GM12878 (cell line): ENCODE measurements at regions of chr15 and their contacts with region 1.

Region 1: DNA sequence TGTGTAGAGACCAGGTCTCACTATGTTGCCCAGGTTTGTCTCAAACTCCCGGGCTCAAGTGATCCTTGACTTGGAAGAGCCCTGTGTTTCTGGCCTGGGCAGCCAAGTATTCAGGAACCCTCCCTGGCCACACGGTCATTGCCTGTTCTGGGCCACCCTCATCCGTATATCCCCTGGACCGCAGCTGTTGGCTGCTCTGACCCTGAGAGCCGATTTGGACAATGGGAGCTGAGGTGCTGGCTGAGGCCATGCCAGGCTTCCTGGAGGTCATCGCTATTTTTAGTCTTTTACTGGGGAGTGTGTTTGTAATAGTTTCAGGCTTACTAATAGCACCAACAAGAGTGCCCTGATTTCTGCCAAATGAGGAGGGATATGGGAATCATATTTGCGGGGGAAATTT is 60.7 kb downstream of the ADAMTS7 start:
- DNase-seq: no peak
- ATAC-seq: no peak
- H3K4me3 ChIP-seq: no peak overlapping the region
- H3K27ac ChIP-seq: no peak overlapping the region
- H3K4me1 ChIP-seq: no peaks in the 10 kb centered on the region
- H3K27me3 ChIP-seq: no peaks in the 10 kb centered on the region
- CTCF ChIP-seq: no peak
- EP300 ChIP-seq: no peak
- POLR2A ChIP-seq: no peak
- RAD21 ChIP-seq: no peak

Region 2: GRCh38 chr15:77944002-77944867 is 806.3 kb before region 1 on chr15:
- CTCF ChIA-PET with region 1: no interaction called
- POLR2A ChIA-PET with region 1: no interaction called
- RAD21 ChIA-PET with region 1: no interaction called
- SMC1A ChIA-PET with region 1: no interaction called
- in situ Hi-C with region 1: loop called (anchors 5 kb)
- intact Hi-C with region 1: no loop called
- DNase-seq: no peak
- ATAC-seq: peak; percentile 91
- H3K4me3 ChIP-seq: peak overlapping the region; percentile 50; the same call in 1 of the 2 replicates
- H3K27ac ChIP-seq: no peak overlapping the region
- H3K4me1 ChIP-seq: no peaks in the 10 kb centered on the region
- H3K27me3 ChIP-seq: no peaks in the 10 kb centered on the region
- CTCF ChIP-seq: no peak
- EP300 ChIP-seq: no peak
- POLR2A ChIP-seq: peak; percentile 40; the same call in 1 of the 2 replicates
- RAD21 ChIP-seq: no peak

Region 3: GRCh38 chr15:78618490-78618934 is 132.1 kb before region 1 on chr15:
- CTCF ChIA-PET with region 1: interaction called, 4 read pairs
- POLR2A ChIA-PET with region 1: no interaction called
- RAD21 ChIA-PET with region 1: no interaction called
- SMC1A ChIA-PET with region 1: interaction called, 3 read pairs
- in situ Hi-C with region 1: no loop called
- intact Hi-C with region 1: loop called (anchors 1 kb)
- DNase-seq: peak; percentile 37
- ATAC-seq: peak; percentile 92
- H3K4me3 ChIP-seq: no peak overlapping the region
- H3K27ac ChIP-seq: no peak overlapping the region
- H3K4me1 ChIP-seq: no peaks in the 10 kb centered on the region
- H3K27me3 ChIP-seq: peaks cover 5 to 7% of the 10 kb centered on the region in 2 experiments
- CTCF ChIP-seq: peak; percentile 77 to 83 (median 80)
- EP300 ChIP-seq: no peak
- POLR2A ChIP-seq: no peak
- RAD21 ChIP-seq: peak; percentile 84

Region 4: DNA sequence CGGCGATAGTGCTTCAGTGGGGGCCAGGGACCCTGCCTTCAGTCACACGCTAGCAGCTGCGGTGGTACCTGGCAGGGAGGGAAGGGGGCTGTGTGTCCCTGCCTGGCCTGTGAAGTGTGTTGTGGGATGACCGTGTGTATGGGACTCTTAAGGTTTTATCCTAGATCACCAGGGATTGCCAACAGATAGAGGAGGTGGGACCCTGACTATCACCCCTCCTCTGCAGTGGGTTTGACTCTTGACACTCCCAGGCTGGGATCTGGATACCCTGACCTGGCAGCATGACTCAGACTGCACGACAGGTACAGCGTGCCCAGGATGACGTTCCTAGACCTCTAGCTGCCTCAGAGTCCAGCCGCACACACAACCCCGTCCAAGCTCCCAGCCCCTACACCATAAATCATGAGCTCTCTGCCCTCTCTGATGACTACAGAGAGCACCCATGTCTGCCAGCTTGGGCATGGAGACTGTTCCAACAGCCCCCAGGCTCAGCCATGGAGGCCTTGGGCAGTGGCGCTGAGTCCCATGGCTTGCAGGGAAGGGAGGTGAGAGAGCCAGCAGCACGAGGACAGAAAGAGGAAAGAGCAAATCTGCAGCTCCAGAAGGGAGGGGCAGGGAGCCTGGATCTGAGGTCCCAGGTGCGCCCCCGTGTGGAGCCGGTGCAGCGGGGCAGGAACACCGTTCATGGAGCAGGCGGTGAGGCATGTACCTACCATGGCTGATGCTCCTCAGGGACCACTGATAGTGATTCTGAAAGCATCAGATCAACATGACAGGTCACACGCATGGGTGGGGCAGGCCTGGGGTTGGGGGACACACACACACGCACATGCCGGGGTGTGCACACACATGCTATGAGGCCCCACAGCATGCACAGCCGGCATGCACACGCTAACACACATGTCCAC is 10.3 kb before region 1 on chr15:
- CTCF ChIA-PET with region 1: interaction called, 18 read pairs
- POLR2A ChIA-PET with region 1: no interaction called
- RAD21 ChIA-PET with region 1: interaction called, 3 read pairs
- SMC1A ChIA-PET with region 1: no interaction called
- in situ Hi-C with region 1: no loop called
- intact Hi-C with region 1: no loop called
- DNase-seq: no peak
- ATAC-seq: peak; percentile 97
- H3K4me3 ChIP-seq: no peak overlapping the region
- H3K27ac ChIP-seq: no peak overlapping the region
- H3K4me1 ChIP-seq: no peaks in the 10 kb centered on the region
- H3K27me3 ChIP-seq: no peaks in the 10 kb centered on the region
- CTCF ChIP-seq: peak; percentile 59 to 81 (median 74)
- EP300 ChIP-seq: no peak
- POLR2A ChIP-seq: no peak
- RAD21 ChIP-seq: 0 out of 2 replicates have a peak, but pooled peaks have one; percentile 33